GM12878 (cell line): ENCODE measurements at regions of chr21 and their contacts with region 1.

Region 1: DNA sequence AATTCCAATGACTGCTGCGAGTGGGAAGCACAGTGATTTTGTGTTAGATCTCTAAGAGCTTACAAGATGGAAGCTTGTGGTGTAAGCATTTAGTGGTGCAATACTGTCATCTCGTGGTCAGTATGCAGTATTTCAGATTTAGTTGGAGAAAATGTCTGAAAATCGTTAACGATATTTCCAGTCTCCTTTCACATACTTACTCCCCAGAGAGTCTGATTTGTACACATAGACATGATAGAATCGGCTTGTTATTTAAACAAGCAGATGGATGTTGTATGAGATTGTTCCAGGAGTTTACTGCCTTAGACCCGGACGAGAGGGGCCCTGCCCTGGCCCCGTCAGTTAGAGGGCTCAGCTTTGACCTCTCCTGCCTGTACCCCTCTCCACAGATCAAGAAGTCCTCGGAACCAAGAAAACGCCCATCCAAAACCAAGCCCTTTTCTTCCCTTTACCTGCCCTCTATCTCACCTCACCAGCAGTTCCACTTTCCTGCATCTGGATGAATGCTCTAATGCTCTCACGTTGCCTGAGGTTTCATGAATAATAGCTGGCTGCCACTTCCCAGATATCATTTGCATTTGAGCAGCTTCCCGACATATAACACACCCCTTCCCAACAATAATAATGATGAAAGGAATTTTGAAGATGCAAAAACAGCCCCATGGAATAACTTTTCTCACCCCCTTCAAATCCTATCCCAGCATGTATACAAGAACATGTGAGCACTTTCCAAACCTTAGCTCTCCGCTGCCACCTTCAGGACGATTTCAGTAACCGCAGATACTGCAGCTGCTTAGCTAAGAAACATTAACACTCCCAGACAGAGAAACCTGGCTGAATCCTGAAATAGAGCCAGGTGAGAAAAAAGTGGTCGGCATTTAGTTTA is 247.3 kb downstream of the LTN1 start:
- DNase-seq: peak; percentile 33
- ATAC-seq: peak; percentile 97
- H3K4me3 ChIP-seq: peak overlapping the region; percentile 44; the same call in 1 of the 2 replicates
- H3K27ac ChIP-seq: no peak overlapping the region
- H3K4me1 ChIP-seq: peaks cover 3% of the 10 kb centered on the region; the same call in 1 of the 2 replicates
- H3K27me3 ChIP-seq: no peaks in the 10 kb centered on the region
- CTCF ChIP-seq: peak; percentile 85 to 94 (median 94)
- EP300 ChIP-seq: no peak
- POLR2A ChIP-seq: no peak
- RAD21 ChIP-seq: peak; percentile 97

Region 2: GRCh38 chr21:26842976-26843932 is 1902.1 kb before region 1 on chr21:
- CTCF ChIA-PET with region 1: interaction called, 21 read pairs
- POLR2A ChIA-PET with region 1: no interaction called
- RAD21 ChIA-PET with region 1: interaction called, 4 read pairs
- SMC1A ChIA-PET with region 1: interaction called, 13 read pairs
- in situ Hi-C with region 1: loop called (anchors 5 kb)
- intact Hi-C with region 1: loop called (anchors 2 kb)
- DNase-seq: no peak
- ATAC-seq: no peak
- H3K4me3 ChIP-seq: no peak overlapping the region
- H3K27ac ChIP-seq: no peak overlapping the region
- H3K4me1 ChIP-seq: no peaks in the 10 kb centered on the region
- H3K27me3 ChIP-seq: no peaks in the 10 kb centered on the region
- CTCF ChIP-seq: no peak
- EP300 ChIP-seq: no peak
- POLR2A ChIP-seq: no peak; the same call in 1 of the 2 replicates
- RAD21 ChIP-seq: no peak

Region 3: DNA sequence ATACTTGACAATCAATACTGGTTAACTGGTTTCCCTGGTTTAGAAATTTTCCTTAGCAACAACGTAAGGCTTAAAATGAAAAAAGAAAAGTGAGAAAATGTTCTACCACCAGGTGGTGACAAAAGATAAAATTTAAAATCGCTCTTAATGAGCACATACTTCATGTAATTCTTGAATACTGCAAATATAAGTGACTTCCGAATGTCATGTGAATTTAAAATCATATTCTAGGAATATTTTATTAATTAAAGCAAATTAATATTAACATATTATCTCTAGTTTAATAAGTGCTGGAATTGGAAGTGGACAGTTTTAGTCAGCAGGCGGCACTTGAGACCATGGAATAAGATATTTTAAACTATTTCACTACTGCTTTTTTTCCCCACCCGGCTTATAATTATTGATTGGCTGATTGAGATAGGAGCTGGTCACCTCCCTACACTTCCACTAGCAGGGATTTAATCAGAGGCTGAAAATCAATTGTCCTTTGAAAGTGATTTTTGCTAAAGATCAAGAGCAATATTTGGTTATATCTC is 1895.2 kb before region 1 on chr21:
- CTCF ChIA-PET with region 1: interaction called, 21 read pairs
- POLR2A ChIA-PET with region 1: no interaction called
- RAD21 ChIA-PET with region 1: interaction called, 8 read pairs
- SMC1A ChIA-PET with region 1: interaction called, 13 read pairs
- in situ Hi-C with region 1: no loop called
- intact Hi-C with region 1: loop called (anchors 2 kb)
- DNase-seq: peak; percentile 0
- ATAC-seq: peak; percentile 40; the same call in 2 of the 3 replicates
- H3K4me3 ChIP-seq: no peak overlapping the region
- H3K27ac ChIP-seq: no peak overlapping the region
- H3K4me1 ChIP-seq: no peaks in the 10 kb centered on the region
- H3K27me3 ChIP-seq: no peaks in the 10 kb centered on the region
- CTCF ChIP-seq: peak; percentile 8 to 33 (median 11); a peak in 3 of 6 replicates
- EP300 ChIP-seq: no peak
- POLR2A ChIP-seq: no peak
- RAD21 ChIP-seq: peak; percentile 39

Region 4: GRCh38 chr21:27700974-27701614 is 1044.3 kb before region 1 on chr21:
- CTCF ChIA-PET with region 1: interaction called, 10 read pairs
- POLR2A ChIA-PET with region 1: no interaction called
- RAD21 ChIA-PET with region 1: interaction called, 3 read pairs
- SMC1A ChIA-PET with region 1: no interaction called
- in situ Hi-C with region 1: no loop called
- intact Hi-C with region 1: no loop called
- DNase-seq: no peak
- ATAC-seq: peak; percentile 38; the same call in 1 of the 3 replicates
- H3K4me3 ChIP-seq: no peak overlapping the region
- H3K27ac ChIP-seq: no peak overlapping the region
- H3K4me1 ChIP-seq: no peaks in the 10 kb centered on the region
- H3K27me3 ChIP-seq: no peaks in the 10 kb centered on the region
- CTCF ChIP-seq: peak; percentile 23 to 48 (median 24); a peak in 4 of 6 replicates
- EP300 ChIP-seq: no peak
- POLR2A ChIP-seq: no peak
- RAD21 ChIP-seq: peak; percentile 62

Region 5: DNA sequence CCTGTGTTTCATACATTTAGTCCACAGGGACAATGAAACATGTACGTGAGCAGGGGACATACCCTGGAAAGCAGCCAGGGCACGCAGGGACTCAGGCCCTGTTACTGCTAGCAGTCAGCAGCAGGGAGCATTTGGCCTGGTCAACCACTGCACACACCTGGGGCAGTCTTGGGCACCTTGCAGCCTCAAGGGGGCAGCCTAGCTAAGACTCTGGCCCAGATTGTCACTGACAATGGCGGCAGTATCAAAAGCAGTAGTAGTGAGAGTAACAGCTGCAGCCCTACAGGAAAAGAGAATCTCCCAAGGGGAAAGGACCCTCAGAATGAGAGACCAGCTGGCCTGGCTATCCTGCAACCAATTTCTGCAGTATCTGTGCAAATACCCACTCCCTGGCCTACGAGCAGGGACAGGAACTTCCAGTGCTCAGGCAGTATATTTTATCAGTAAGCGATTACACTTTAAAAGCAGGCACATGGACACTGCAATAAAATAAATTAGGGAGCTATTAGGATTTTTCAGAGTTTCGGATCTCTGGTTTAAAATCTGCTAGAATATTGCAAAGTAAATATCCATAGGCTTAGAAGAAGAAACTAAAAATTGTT is 228.3 kb before region 1 on chr21:
- CTCF ChIA-PET with region 1: interaction called, 42 read pairs
- POLR2A ChIA-PET with region 1: no interaction called
- RAD21 ChIA-PET with region 1: interaction called, 22 read pairs
- SMC1A ChIA-PET with region 1: interaction called, 23 read pairs
- in situ Hi-C with region 1: no loop called
- intact Hi-C with region 1: loop called (anchors 1 kb)
- DNase-seq: peak; percentile 8
- ATAC-seq: peak; percentile 77
- H3K4me3 ChIP-seq: no peak overlapping the region
- H3K27ac ChIP-seq: no peak overlapping the region
- H3K4me1 ChIP-seq: no peaks in the 10 kb centered on the region
- H3K27me3 ChIP-seq: no peaks in the 10 kb centered on the region
- CTCF ChIP-seq: peak; percentile 57 to 65 (median 61); a peak in 5 of 6 replicates
- EP300 ChIP-seq: no peak
- POLR2A ChIP-seq: no peak
- RAD21 ChIP-seq: peak; percentile 24; the same call in 1 of the 2 replicates

Region 6: DNA sequence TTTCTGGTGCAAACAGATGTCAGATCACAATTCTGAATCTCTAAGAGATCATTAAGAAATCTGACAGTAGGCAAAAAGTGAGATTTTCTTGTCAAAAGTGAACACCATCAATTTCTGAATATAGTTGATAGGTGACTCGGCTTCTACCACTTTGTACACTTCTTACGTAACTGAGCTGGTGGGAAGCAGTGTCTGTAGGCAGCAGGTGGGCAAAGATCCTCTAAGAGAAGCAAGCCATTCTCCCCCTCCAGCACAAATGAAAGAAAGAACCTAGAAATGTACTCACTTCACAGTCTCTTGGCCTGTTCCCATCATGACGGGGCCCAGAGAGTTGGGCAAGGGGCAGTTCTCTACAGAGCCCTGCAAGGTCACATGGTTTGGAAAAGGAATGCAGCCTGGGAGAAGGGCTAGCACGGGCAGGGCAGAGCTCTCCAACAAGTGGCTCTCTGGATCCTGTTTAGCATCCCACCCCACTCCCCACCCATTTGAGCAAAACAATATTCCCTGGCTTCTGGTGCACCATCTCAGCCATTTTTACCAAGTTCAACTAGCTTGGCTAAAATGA is 165.3 kb before region 1 on chr21:
- CTCF ChIA-PET with region 1: no interaction called
- POLR2A ChIA-PET with region 1: no interaction called
- RAD21 ChIA-PET with region 1: no interaction called
- SMC1A ChIA-PET with region 1: no interaction called
- in situ Hi-C with region 1: no loop called
- intact Hi-C with region 1: no loop called
- DNase-seq: no peak
- ATAC-seq: no peak
- H3K4me3 ChIP-seq: no peak overlapping the region
- H3K27ac ChIP-seq: no peak overlapping the region
- H3K4me1 ChIP-seq: no peaks in the 10 kb centered on the region
- H3K27me3 ChIP-seq: no peaks in the 10 kb centered on the region
- CTCF ChIP-seq: no peak
- EP300 ChIP-seq: no peak
- POLR2A ChIP-seq: no peak
- RAD21 ChIP-seq: no peak

Region 7: DNA sequence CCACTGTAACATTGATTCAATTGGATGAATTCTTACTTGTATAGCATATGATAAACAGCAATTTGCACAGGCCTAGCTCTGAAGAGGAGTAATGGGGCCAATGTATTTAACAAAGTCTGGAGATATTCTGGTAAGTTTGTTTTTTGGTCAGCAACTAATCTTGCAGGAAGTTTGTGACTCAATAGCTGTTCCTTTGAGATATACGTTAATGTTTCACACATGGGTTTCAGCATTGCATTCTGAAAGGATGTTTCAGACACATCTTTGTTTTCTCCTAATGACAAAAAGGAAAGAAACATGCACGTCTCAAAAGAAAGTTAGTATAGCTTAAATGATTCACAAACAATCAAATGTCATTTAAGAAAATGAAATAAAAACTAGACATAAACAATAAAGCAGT is 198.3 kb after region 1 on chr21:
- CTCF ChIA-PET with region 1: interaction called, 20 read pairs
- POLR2A ChIA-PET with region 1: no interaction called
- RAD21 ChIA-PET with region 1: interaction called, 9 read pairs
- SMC1A ChIA-PET with region 1: interaction called, 14 read pairs
- in situ Hi-C with region 1: no loop called
- intact Hi-C with region 1: loop called (anchors 1 kb)
- DNase-seq: no peak
- ATAC-seq: no peak
- H3K4me3 ChIP-seq: no peak overlapping the region
- H3K27ac ChIP-seq: no peak overlapping the region
- H3K4me1 ChIP-seq: no peaks in the 10 kb centered on the region
- H3K27me3 ChIP-seq: no peaks in the 10 kb centered on the region
- CTCF ChIP-seq: no peak
- EP300 ChIP-seq: no peak
- POLR2A ChIP-seq: no peak
- RAD21 ChIP-seq: no peak